CD8-positive, alpha-beta T cell (primary cell): ENCODE measurements at regions of chr1 and their contacts with region 1.

Region 1: DNA sequence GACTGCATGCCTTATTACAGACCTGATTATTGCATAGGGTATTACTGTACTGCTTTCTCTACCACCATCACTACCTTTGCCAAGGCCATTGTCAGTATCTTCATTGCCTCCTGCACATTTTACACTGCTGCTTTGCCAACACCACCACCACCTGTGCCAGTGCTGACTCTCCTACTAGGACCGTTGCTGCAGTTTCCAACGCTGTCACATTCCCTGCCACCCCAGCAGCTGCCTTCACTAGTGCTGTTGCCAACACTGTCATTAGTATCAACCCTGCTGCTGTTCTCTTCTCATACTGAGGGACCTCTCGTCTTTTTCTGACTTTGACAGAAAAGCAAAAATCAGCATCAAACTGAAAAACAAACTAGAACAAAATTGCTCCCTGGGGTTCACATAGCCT is 394.9 kb upstream of the B3GALT2 start:
- DNase-seq: no peak
- ATAC-seq: no peak
- H3K4me3 ChIP-seq: no peak overlapping the region
- H3K4me3 Mint-ChIP-seq: no peak overlapping the region
- H3K27ac ChIP-seq: no peak overlapping the region
- H3K27ac Mint-ChIP-seq: no peak overlapping the region
- H3K4me1 ChIP-seq: no peaks in the 10 kb centered on the region
- H3K4me1 Mint-ChIP-seq: no peaks in the 10 kb centered on the region
- H3K27me3 ChIP-seq: no peaks in the 10 kb centered on the region
- H3K27me3 Mint-ChIP-seq: no peaks in the 10 kb centered on the region
- CTCF ChIP-seq: no peak

Region 2: GRCh38 chr1:193592317-193592716 is 11.0 kb after region 1 on chr1:
- CTCF ChIA-PET with region 1: no interaction called
- POLR2A ChIA-PET with region 1: no interaction called
- intact Hi-C with region 1: loop called in 1 of 2 experiments (anchors 1 kb)
- DNase-seq: peak in 2 of 9 experiments; percentile 53 to 58
- ATAC-seq: peak; percentile 59
- H3K4me3 ChIP-seq: no peak overlapping the region
- H3K4me3 Mint-ChIP-seq: peak overlapping the region; percentile 29
- H3K27ac ChIP-seq: no peak overlapping the region
- H3K27ac Mint-ChIP-seq: peak overlapping the region; percentile 76
- H3K4me1 ChIP-seq: peaks cover 7% of the 10 kb centered on the region
- H3K4me1 Mint-ChIP-seq: peaks cover 21% of the 10 kb centered on the region
- H3K27me3 ChIP-seq: no peaks in the 10 kb centered on the region
- H3K27me3 Mint-ChIP-seq: no peaks in the 10 kb centered on the region
- CTCF ChIP-seq: no peak